ENCODE measurements at regions of chr21 and their contacts with region 1.

Region 1: GRCh38 chr21:32597205-32597604 is 11.9 kb upstream of the TCP10L start:
- DNase-seq: peak; percentile 85
- H3K4me3 ChIP-seq: no peak overlapping the region
- H3K27ac ChIP-seq: peak overlapping the region; percentile 68
- H3K4me1 ChIP-seq: peaks cover 9% of the 10 kb centered on the region
- H3K27me3 ChIP-seq: no peaks in the 10 kb centered on the region
- CTCF ChIP-seq: no peak
- POLR2A ChIP-seq: no peak

Region 2: GRCh38 chr21:31866077-31866511 is 731.1 kb before region 1 on chr21:
- CTCF ChIA-PET with region 1: interaction called, 31 read pairs
- POLR2A ChIA-PET with region 1: no interaction called
- dilution Hi-C with region 1: no loop called
- intact Hi-C with region 1: loop called (anchors 1 kb)
- DNase-seq: peak; percentile 72
- H3K4me3 ChIP-seq: no peak overlapping the region
- H3K27ac ChIP-seq: no peak overlapping the region
- H3K4me1 ChIP-seq: no peaks in the 10 kb centered on the region
- H3K27me3 ChIP-seq: peaks cover 7 to 15% of the 10 kb centered on the region in 2 experiments
- CTCF ChIP-seq: peak; percentile 81 to 95
- POLR2A ChIP-seq: no peak

Region 3: DNA sequence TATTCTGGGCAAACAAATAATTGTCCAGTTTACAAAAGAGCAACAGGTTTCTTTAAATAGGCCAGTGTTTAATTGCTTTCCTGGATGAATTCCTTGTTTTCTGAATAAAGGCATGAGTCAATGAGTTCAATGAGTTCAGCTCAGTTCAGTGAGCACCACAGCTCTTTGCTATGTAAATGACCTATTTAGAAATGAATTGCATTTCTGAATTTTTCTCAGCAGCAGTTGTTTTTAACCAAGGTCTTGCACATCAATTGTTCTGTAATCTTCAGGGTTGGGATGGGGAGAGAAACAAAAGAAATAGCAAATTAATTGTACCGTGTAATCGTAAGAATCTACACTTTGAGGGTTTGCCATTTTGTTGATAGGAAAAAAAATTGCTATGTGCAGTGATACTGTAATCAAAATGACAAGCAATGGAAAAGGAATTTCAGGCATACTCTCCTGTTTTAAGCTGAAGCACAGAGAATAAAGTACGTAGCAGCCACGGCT is 364.1 kb before region 1 on chr21:
- CTCF ChIA-PET with region 1: no interaction called
- POLR2A ChIA-PET with region 1: no interaction called
- dilution Hi-C with region 1: no loop called
- intact Hi-C with region 1: no loop called
- DNase-seq: no peak
- H3K4me3 ChIP-seq: no peak overlapping the region
- H3K27ac ChIP-seq: no peak overlapping the region
- H3K4me1 ChIP-seq: peaks cover 4% of the 10 kb centered on the region
- H3K27me3 ChIP-seq: peaks cover 0 to 2% of the 10 kb centered on the region in 2 experiments
- CTCF ChIP-seq: no peak
- POLR2A ChIP-seq: no peak

Region 4: GRCh38 chr21:32306021-32306780 is 291.0 kb before region 1 on chr21:
- CTCF ChIA-PET with region 1: interaction called, 13 read pairs
- POLR2A ChIA-PET with region 1: no interaction called
- dilution Hi-C with region 1: no loop called
- intact Hi-C with region 1: loop called (anchors 5 kb)
- DNase-seq: peak; percentile 25
- H3K4me3 ChIP-seq: no peak overlapping the region
- H3K27ac ChIP-seq: no peak overlapping the region
- H3K4me1 ChIP-seq: no peaks in the 10 kb centered on the region
- H3K27me3 ChIP-seq: no peaks in the 10 kb centered on the region
- CTCF ChIP-seq: peak; percentile 37 to 45
- POLR2A ChIP-seq: no peak

Region 5: GRCh38 chr21:32392880-32393676 is 204.1 kb before region 1 on chr21 and contains the start of gene URB1:
- CTCF ChIA-PET with region 1: interaction called, 26 read pairs
- POLR2A ChIA-PET with region 1: no interaction called
- dilution Hi-C with region 1: no loop called
- intact Hi-C with region 1: no loop called
- DNase-seq: peak; percentile 87
- H3K4me3 ChIP-seq: peak within 1 kb of the TSS; percentile 75 to 79 (median 78)
- H3K27ac ChIP-seq: peak within 1 kb of the TSS; percentile 62
- H3K4me1 ChIP-seq: peaks cover 13% of the 10 kb centered on the region
- H3K27me3 ChIP-seq: no peaks in the 10 kb centered on the region
- CTCF ChIP-seq: no peak
- POLR2A ChIP-seq: peak; percentile 92
- total RNA-seq, gene URB1: 21.4 and 27.3 TPM in 2 replicates

Region 6: GRCh38 chr21:32520875-32521735 is 76.1 kb before region 1 on chr21:
- CTCF ChIA-PET with region 1: interaction called, 13 read pairs
- POLR2A ChIA-PET with region 1: interaction called, 7 read pairs
- dilution Hi-C with region 1: no loop called
- intact Hi-C with region 1: loop called (anchors 2 kb)
- DNase-seq: peak; percentile 98
- H3K4me3 ChIP-seq: no peak overlapping the region
- H3K27ac ChIP-seq: peak overlapping the region; percentile 100
- H3K4me1 ChIP-seq: peaks cover 71% of the 10 kb centered on the region
- H3K27me3 ChIP-seq: no peaks in the 10 kb centered on the region
- CTCF ChIP-seq: no peak
- POLR2A ChIP-seq: peak; percentile 59